ENCODE measurements at regions of chr7 and their contacts with region 1.

Region 1: GRCh38 chr7:115910541-115911164 is 119.9 kb downstream of the TFEC start:
- DNase-seq: peak in 1 of 2 experiments; percentile 54
- H3K4me3 ChIP-seq: no peak overlapping the region
- H3K27ac ChIP-seq: no peak overlapping the region
- H3K4me1 ChIP-seq: no peaks in the 10 kb centered on the region; the same call in 1 of the 2 replicates
- H3K27me3 ChIP-seq: no peaks in the 10 kb centered on the region
- CTCF ChIP-seq: peak; percentile 66; the same call in 1 of the 2 replicates

Region 2: DNA sequence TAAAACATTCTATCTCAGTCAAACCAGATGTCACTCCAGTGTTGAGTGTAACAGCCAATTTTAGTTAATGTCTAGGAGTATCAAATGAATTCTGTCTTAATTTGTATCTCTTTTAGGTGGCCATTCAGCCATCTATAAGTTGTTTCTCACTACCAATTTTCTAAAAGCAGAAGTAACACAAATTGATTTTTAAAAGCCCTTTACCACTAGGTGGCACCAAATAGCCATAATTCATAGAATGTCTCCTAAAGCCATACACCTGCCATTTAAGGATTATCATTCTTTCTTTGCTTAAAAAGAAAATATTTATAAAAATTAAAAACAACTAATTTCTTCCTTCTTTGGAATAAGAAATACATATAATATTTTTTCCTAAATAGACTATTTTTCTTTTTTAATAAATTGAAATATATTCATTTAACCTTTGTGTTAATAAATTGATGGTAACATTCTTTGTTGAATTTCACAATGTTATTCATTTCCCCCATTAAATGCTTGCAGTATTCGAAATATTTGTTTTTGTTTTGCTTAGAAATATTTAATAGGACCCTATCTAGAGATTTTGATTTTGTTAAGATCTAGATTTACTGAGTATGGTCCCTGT is 1884.1 kb before region 1 on chr7:
- CTCF ChIA-PET with region 1: no interaction called
- POLR2A ChIA-PET with region 1: no interaction called
- intact Hi-C with region 1: loop called (anchors 2 kb)
- DNase-seq: no peak
- H3K4me3 ChIP-seq: no peak overlapping the region
- H3K27ac ChIP-seq: no peak overlapping the region
- H3K4me1 ChIP-seq: no peaks in the 10 kb centered on the region
- H3K27me3 ChIP-seq: no peaks in the 10 kb centered on the region
- CTCF ChIP-seq: peak; percentile 76

Region 3: GRCh38 chr7:116122972-116123595 is 212.4 kb after region 1 on chr7:
- CTCF ChIA-PET with region 1: no interaction called
- POLR2A ChIA-PET with region 1: no interaction called
- intact Hi-C with region 1: loop called (anchors 1 kb)
- DNase-seq: peak in 1 of 2 experiments; percentile 12
- H3K4me3 ChIP-seq: no peak overlapping the region
- H3K27ac ChIP-seq: no peak overlapping the region
- H3K4me1 ChIP-seq: no peaks in the 10 kb centered on the region
- H3K27me3 ChIP-seq: no peaks in the 10 kb centered on the region
- CTCF ChIP-seq: peak; percentile 77

Measured in PC-9 (cell line).